Transverse colon (tissue), 4 donors: ENCODE measurements at regions of chr9 and their contacts with region 1.

Region 1: DNA sequence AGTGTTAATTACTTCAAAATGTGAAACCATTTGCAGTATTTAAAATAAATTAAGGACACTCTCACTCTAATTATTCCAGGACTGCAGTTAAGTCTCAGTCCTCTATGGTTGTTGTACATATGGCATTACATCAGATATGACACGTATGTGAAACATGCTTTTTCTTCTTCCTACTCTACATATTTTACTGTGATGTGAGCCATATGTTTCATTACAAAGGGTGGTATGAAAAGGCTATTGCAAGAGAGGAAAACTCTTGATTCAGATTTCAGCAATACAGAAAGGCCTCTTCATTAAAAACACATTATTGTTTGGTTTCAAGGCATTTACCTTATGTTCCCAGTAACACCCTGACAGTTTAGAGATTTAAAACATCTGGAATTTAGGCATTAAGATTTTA is 964.5 kb upstream of the DMAC1 start:
- DNase-seq: no peak
- H3K4me3 ChIP-seq: no peak overlapping the region
- H3K27ac ChIP-seq: no peak overlapping the region
- H3K4me1 ChIP-seq: peaks cover 0 to 5% (median 2%) of the 10 kb centered on the region in 4 donors
- H3K27me3 ChIP-seq: no peaks in the 10 kb centered on the region
- CTCF ChIP-seq: no peak
- EP300 ChIP-seq: no peak
- POLR2A ChIP-seq: no peak

Region 2: DNA sequence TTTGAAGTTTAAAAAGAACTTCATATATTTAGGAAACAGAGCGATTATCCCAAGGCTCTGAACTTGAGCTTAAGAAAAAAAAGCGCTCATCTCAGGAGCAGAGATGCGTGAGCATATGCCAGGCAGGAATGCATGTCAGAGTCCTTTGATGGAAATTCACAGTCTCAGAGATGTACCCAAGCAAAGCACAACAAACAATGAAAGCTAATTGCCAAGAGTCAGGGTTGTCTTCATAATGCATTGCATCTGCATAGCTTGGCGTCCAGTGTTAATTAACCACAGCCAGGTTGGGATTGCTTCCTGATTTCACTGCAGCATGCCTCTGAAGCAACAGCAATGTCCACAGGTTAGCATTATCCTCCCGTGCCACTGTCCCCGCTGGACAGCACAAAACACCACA is 57.5 kb before region 1 on chr9:
- in situ Hi-C with region 1: loop called in 1 of 4 experiments (anchors 10 kb)
- intact Hi-C with region 1: no loop called
- DNase-seq: no peak
- H3K4me3 ChIP-seq: no peak overlapping the region
- H3K27ac ChIP-seq: no peak overlapping the region
- H3K4me1 ChIP-seq: peaks cover 0 to 3% (median 0%) of the 10 kb centered on the region in 4 donors
- H3K27me3 ChIP-seq: no peaks in the 10 kb centered on the region
- CTCF ChIP-seq: no peak
- EP300 ChIP-seq: no peak
- POLR2A ChIP-seq: no peak

Region 3: GRCh38 chr9:8857926-8858595 is 94.0 kb after region 1 on chr9:
- in situ Hi-C with region 1: no loop called
- intact Hi-C with region 1: no loop called
- DNase-seq: peak; percentile 65
- H3K4me3 ChIP-seq: peak overlapping the region; percentile 29 to 88 (median 75)
- H3K27ac ChIP-seq: peak overlapping the region; percentile 19 to 78 (median 76)
- H3K4me1 ChIP-seq: peaks cover 0 to 17% (median 13%) of the 10 kb centered on the region in 4 donors
- H3K27me3 ChIP-seq: peaks cover 42% of the 10 kb centered on the region
- CTCF ChIP-seq: no peak
- EP300 ChIP-seq: no peak
- POLR2A ChIP-seq: peak; percentile 19